Activated CD8-positive, alpha-beta T cell treated with anti-CD3 and anti-CD28 coated beads, Interleukin-2, amount 10 ng/mL, durations not matched to agents 7 days and 5 days (primary cell): ENCODE measurements at regions of chr4 and their contacts with region 1.

Region 1: GRCh38 chr4:170259631-170260153 is 169.9 kb upstream of the AADAT start:
- DNase-seq: peak; percentile 67
- ATAC-seq: peak; percentile 75
- H3K4me3 Mint-ChIP-seq: no peak overlapping the region
- H3K27ac Mint-ChIP-seq: no peak overlapping the region
- H3K4me1 Mint-ChIP-seq: no peaks in the 10 kb centered on the region
- H3K27me3 Mint-ChIP-seq: no peaks in the 10 kb centered on the region

Region 2: DNA sequence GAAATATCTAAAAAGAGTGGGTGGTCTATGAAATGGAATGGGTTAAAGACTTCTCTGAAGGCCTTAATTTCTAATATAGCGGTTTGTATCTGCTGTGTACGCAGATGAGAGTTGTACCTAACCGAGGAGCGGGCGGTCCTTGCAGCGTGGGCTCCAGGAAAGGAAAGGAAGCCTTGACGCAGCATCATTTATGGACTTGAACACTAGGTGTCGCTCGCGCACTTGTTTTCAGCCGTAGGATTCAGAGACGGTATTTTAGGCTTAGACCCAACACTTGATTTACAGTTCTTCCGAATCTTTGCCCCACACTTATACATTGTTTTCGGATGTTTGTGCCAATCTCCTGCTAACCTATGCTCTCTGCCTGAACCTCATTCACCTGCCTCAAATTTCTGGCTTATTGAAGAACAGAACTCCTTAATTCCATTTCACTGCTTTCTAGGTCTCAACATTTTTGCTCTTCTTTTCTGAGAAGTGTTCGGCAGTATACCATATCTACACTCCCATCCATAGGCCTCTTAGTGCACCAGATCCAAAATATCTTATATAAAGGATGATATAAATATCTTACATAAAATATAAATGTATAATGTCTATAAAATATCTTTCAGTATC is 121.0 kb before region 1 on chr4:
- CTCF ChIA-PET with region 1: interaction called, 12 read pairs
- POLR2A ChIA-PET with region 1: no interaction called
- DNase-seq: peak; percentile 76
- ATAC-seq: peak; percentile 84
- H3K4me3 Mint-ChIP-seq: no peak overlapping the region
- H3K27ac Mint-ChIP-seq: no peak overlapping the region
- H3K4me1 Mint-ChIP-seq: peaks cover 3% of the 10 kb centered on the region
- H3K27me3 Mint-ChIP-seq: no peaks in the 10 kb centered on the region

Region 3: DNA sequence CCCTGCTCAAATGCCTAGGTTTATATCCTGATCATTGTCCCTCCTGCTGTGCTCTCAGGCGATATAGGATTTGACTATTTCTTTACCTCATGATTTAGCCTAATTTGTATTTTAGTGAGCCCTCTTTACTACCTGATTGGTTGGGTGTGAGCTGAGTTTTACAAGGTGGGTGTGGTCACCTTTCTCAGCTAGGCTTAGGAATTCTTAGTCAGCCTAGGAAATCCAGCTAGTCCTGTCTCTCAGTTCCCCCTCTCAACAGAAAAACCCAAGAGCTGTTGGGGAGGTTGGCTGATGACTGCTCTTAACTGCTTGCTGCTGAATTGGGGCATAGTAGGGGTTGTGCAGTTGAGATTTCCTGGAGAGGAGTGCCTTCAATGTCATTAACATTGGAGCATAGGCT is 69.4 kb before region 1 on chr4:
- CTCF ChIA-PET with region 1: no interaction called
- POLR2A ChIA-PET with region 1: no interaction called
- DNase-seq: no peak
- ATAC-seq: no peak
- H3K4me3 Mint-ChIP-seq: no peak overlapping the region
- H3K27ac Mint-ChIP-seq: no peak overlapping the region
- H3K4me1 Mint-ChIP-seq: no peaks in the 10 kb centered on the region
- H3K27me3 Mint-ChIP-seq: no peaks in the 10 kb centered on the region

Region 4: GRCh38 chr4:170270628-170271027 is 10.9 kb after region 1 on chr4:
- CTCF ChIA-PET with region 1: interaction called, 10 read pairs
- POLR2A ChIA-PET with region 1: no interaction called
- DNase-seq: no peak
- ATAC-seq: no peak
- H3K4me3 Mint-ChIP-seq: no peak overlapping the region
- H3K27ac Mint-ChIP-seq: no peak overlapping the region
- H3K4me1 Mint-ChIP-seq: no peaks in the 10 kb centered on the region
- H3K27me3 Mint-ChIP-seq: no peaks in the 10 kb centered on the region

Region 5: DNA sequence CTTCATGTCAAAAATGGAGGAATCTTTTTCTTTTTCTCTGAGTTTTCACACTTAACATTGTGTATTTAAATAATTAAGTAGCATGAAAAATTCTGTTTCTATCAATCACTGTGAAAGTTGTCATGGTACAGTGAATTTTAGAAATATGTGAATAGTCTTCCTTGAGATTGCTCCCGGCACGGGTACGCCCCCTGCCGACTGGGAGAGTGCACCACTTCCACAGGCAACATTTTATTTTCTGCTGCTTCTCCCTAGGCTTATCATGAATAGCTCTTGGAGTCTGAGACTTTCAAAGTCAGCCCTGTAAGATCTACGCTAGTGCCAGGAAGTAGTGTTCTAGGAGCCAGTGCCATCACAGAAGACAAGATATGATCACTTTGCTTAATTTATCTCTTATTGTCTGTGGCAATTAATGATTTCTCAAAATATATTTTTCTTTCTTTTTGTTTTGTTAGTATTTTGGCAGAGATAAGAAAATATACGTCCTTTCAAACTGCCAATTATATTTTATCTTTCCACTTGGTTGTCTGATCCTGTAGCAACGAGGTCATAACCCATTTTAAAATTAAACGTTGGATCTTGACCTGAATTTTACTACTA is 593.8 kb after region 1 on chr4:
- CTCF ChIA-PET with region 1: interaction called, 10 read pairs
- POLR2A ChIA-PET with region 1: no interaction called
- DNase-seq: peak; percentile 32
- ATAC-seq: no peak
- H3K4me3 Mint-ChIP-seq: no peak overlapping the region
- H3K27ac Mint-ChIP-seq: no peak overlapping the region
- H3K4me1 Mint-ChIP-seq: no peaks in the 10 kb centered on the region
- H3K27me3 Mint-ChIP-seq: no peaks in the 10 kb centered on the region